Activated B cell treated with CpG ODN at 0.5 μM for 24 hours (primary cell): ENCODE measurements at regions of chr6 and their contacts with region 1.

Region 1: DNA sequence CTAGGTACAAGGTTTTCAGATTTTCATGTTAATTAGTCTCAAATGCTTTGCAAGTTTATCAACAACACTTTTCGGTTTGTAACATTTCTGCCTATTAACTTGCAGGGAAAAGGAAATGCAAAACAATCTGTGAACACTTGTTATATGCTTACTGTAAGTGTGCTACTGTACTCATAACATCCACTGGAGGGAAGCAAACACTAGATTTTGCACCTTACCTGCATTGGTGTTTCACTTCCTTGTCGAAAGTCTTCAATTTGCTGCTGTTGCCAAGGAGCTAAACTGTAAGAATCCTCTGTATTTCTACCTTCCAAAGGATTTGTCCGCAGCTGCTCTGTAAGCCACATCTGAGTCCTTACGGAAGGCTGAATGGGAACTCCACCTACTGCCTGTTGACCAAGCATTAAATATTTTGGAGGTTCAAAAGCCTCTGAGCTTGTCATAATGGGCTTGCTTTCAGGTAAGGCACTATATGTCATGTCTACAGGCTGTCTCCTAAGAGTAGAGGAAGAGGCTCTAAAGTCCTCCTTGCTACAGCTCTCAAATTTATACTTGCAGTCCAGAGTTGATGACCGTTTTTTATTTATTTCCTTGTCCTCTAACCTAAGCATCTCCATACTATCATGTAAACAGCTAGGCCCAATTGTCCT is 17.3 kb downstream of the PLN start:
- DNase-seq: peak; percentile 16
- ATAC-seq: peak; percentile 94
- H3K4me3 Mint-ChIP-seq: no peak overlapping the region
- H3K27ac Mint-ChIP-seq: no peak overlapping the region
- H3K4me1 Mint-ChIP-seq: peaks cover 8% of the 10 kb centered on the region
- H3K27me3 Mint-ChIP-seq: no peaks in the 10 kb centered on the region
- CTCF ChIP-seq: no peak

Region 2: DNA sequence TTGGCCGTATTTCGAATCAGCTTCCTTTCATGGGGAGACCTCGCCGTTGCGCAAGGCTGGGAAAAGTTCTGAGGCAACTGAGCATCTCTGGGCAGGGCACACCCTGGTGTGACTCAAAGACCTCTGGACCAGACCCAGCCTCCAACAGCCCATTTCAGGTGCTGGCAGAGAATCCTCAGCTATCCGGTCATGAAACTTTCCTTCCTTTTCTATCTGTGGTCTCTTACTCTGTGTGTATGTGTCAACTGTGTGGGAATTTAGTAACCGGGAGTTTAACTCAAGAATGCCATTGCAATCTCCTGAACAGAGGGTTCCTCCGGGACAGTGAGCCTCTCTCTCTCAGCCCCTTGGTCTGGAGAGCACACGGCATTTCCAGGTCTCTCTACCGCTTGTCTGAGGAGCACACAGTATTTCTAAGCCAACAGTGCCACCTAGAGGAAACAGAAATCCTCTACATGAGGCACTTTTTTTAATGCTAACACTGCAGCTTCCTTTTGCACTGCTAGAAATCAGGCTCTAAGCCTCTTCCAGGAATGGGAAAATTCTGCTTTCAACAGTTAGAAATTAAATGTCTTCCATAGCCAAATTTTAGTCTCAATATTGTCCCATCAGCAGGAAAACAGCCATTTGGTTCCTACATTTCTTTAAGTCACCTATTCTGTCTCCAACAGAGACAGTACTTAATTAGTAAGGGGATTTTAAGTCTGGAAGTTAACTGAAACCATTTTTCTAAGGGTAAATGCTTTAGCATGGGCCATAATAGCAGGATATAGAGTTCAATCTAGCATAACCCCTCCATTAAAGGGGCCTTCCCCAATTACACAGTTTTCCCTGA is 15.4 kb after region 1 on chr6:
- CTCF ChIA-PET with region 1: interaction called, 17 read pairs
- POLR2A ChIA-PET with region 1: interaction called, 3 read pairs
- intact Hi-C with region 1: no loop called
- DNase-seq: no peak
- ATAC-seq: peak; percentile 34
- H3K4me3 Mint-ChIP-seq: no peak overlapping the region
- H3K27ac Mint-ChIP-seq: no peak overlapping the region
- H3K4me1 Mint-ChIP-seq: peaks cover 2% of the 10 kb centered on the region
- H3K27me3 Mint-ChIP-seq: no peaks in the 10 kb centered on the region
- CTCF ChIP-seq: no peak

Region 3: DNA sequence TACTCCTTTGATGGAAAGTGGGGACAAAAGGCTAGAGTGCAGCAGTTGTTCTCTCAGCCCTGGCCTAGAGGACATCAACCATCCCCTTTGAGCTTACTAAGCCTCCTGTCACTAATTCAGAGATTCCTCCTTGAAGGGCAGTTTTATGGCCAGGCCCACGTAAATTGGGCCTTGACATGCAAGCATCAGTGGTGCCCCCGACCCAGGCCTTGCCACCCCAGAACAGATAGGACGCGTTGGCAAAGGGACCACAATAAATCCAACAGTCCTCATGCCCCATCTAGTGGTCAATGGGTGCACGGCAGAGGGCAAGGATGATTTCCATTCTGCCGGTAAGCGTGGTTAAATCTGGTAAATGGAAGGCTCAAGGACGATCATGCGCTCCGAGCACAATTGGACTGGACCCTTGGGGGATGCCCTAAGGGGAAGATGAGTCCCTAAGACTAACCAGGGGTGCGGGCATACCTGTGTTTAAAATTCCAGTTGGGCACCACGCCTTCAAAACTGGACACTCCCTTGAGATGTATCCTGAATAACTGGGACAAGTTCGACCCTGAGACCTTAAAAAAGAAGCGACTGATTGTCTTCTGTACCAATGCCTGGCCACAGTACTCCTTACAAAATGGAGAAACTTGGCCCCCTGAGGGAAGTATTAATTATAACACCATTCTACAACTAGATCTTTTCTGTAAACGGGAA is 53.4 kb after region 1 on chr6:
- CTCF ChIA-PET with region 1: interaction called, 14 read pairs
- POLR2A ChIA-PET with region 1: no interaction called
- intact Hi-C with region 1: loop called (anchors 1 kb)
- DNase-seq: peak; percentile 41
- ATAC-seq: peak; percentile 93
- H3K4me3 Mint-ChIP-seq: no peak overlapping the region
- H3K27ac Mint-ChIP-seq: no peak overlapping the region
- H3K4me1 Mint-ChIP-seq: peaks cover 19% of the 10 kb centered on the region
- H3K27me3 Mint-ChIP-seq: no peaks in the 10 kb centered on the region
- CTCF ChIP-seq: no peak

Region 4: GRCh38 chr6:118735320-118735719 is 169.9 kb after region 1 on chr6:
- CTCF ChIA-PET with region 1: interaction called, 9 read pairs
- POLR2A ChIA-PET with region 1: no interaction called
- intact Hi-C with region 1: loop called (anchors 1 kb)
- DNase-seq: no peak
- ATAC-seq: peak; percentile 49
- H3K4me3 Mint-ChIP-seq: no peak overlapping the region
- H3K27ac Mint-ChIP-seq: no peak overlapping the region
- H3K4me1 Mint-ChIP-seq: peaks cover 3% of the 10 kb centered on the region
- H3K27me3 Mint-ChIP-seq: no peaks in the 10 kb centered on the region
- CTCF ChIP-seq: no peak

Region 5: DNA sequence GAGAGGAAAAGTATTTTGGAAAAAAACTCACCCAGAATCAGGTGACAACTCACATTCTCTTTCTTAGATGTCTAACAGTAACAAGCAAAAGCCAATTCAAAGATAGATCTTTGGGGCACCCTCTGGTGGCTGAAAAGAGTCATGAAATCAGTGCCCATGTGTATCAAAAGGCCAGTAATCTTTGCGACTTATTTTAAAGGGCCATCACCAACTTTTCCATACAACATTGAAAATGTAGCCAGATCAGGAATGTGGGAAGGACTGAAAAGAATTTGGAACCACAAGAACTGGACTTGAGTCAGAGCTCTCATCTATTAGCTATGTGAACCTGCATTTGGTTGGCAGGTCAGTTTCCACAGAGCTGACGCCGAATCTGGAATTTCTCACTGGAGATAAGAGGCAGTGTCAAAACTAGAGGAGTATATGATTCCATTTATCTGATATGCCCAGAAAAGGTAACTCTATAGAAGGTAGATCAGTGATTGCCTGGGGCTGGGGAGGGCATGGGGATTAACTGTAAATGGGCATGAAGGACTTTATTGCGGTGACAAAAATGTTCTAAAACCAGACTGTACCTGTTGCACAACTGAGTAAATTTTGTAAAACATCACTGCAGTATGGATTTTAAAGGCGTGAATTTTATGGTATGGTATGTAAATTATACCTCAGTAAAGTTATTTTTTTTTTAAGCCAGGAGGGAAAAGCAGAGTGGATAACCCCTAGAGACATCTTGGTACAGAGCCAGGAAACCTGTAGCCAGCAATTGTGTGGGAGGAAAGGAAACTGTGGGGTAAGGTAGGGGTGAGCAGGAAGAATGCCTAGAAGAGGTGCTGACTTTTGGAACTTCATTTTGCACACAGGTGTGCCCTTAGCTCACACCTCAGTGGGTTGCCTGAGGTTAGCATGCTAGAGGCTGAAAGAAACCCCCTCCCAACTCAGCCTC is 211.4 kb after region 1 on chr6:
- CTCF ChIA-PET with region 1: interaction called, 85 read pairs
- POLR2A ChIA-PET with region 1: no interaction called
- intact Hi-C with region 1: loop called (anchors 1 kb)
- DNase-seq: no peak
- ATAC-seq: peak; percentile 82
- H3K4me3 Mint-ChIP-seq: no peak overlapping the region
- H3K27ac Mint-ChIP-seq: no peak overlapping the region
- H3K4me1 Mint-ChIP-seq: peaks cover 5% of the 10 kb centered on the region
- H3K27me3 Mint-ChIP-seq: peaks cover 3% of the 10 kb centered on the region
- CTCF ChIP-seq: peak; percentile 73

Region 6: DNA sequence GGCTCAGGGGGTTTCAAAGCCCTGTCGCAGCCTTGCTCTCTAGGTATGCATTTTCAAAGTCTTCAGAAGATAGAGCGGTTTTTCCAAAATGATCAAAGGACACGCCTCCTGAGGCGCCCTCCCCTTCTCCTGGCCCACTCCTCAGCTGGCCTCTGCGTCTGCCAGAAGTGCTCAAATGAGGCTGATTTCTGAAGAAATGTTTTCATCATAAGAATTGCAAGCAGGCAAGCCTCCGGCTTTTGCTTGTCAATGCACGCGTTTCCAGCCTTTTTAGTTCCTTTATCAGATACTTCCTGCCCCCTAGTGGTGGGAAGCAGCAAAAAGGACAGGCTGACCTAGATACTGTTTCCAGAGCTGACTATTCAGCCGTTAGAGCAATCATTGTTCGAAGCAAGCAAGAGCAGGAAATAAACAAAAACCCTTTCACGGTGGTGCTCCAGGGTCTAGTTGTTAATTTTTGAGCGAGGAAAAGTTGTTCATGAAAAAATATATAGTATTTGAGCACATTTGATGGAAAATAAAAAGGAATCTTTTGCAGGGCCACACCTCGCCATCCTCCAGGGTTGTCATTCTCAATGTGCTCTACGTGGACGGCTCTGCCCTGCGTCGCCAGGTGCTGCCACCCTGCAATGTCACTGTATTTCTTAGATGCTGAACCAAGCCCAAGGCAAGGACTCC is 235.1 kb after region 1 on chr6:
- CTCF ChIA-PET with region 1: interaction called, 40 read pairs
- POLR2A ChIA-PET with region 1: no interaction called
- intact Hi-C with region 1: loop called (anchors 1 kb)
- DNase-seq: peak; percentile 34
- ATAC-seq: peak; percentile 91
- H3K4me3 Mint-ChIP-seq: peak overlapping the region; percentile 52
- H3K27ac Mint-ChIP-seq: no peak overlapping the region
- H3K4me1 Mint-ChIP-seq: peaks cover 25% of the 10 kb centered on the region
- H3K27me3 Mint-ChIP-seq: no peaks in the 10 kb centered on the region
- CTCF ChIP-seq: peak; percentile 25

Region 7: DNA sequence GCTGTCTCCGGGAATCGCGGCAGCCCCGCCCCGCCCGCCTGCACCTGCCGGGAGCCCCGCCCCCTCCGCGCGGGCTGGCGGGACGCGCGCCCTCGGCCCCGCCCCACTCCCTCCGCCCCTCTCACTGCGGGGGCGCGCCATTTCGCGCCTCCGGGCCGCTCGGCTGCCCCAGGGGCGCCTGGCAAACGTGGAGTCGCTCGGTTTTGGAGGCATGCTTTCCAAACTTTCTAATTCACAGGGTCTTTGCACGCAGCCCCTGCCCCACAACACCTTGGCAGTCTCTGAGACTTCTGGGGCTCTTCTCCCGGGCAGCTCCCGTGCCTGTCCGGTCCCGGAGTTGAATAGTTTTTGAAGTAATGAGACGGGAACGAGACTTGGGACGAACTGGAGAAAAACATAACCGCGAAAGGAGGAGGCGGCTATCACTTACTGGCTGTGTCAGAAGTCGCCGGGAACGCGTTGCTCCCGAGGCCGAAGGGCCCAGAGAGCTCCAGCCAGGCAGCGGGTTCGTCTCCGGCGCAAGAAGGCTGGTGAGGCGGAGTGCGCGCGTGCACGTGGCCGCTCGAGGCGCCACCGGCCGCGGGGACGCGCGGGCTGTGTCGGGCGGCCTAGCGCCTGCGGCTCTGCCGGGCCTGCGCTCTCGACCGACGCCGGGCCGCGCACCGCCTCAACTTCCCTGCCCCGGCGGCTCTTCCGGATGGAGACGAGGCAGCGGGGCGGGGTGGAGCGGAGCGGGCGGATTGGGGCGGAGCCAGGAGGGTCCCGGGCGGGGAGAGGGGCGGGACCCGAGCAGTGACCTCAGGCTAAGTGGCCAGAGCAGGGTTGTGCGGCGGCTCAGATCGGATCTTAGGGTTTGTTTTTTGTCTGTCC is 369.3 kb after region 1 on chr6 and contains the start of gene MCM9:
- CTCF ChIA-PET with region 1: no interaction called
- POLR2A ChIA-PET with region 1: no interaction called
- intact Hi-C with region 1: loop called (anchors 10 kb)
- DNase-seq: peak; percentile 90
- ATAC-seq: peak; percentile 92
- H3K4me3 Mint-ChIP-seq: peak within 1 kb of the TSS; percentile 89
- H3K27ac Mint-ChIP-seq: peak within 1 kb of the TSS; percentile 91
- H3K4me1 Mint-ChIP-seq: peaks cover 32% of the 10 kb centered on the region
- H3K27me3 Mint-ChIP-seq: no peaks in the 10 kb centered on the region
- CTCF ChIP-seq: no peak
- total RNA-seq, gene MCM9: 33.3 and 37.0 TPM in 2 replicates